Endothelial cell of umbilical vein (primary cell): ENCODE measurements at regions of chr6 and their contacts with region 1.

Region 1: GRCh38 chr6:37691904-37692806 is 5.5 kb downstream of the MDGA1 start:
- DNase-seq: peak; percentile 50
- H3K4me3 ChIP-seq: no peak overlapping the region
- H3K27ac ChIP-seq: no peak overlapping the region
- H3K4me1 ChIP-seq: peaks cover 10% of the 10 kb centered on the region
- H3K27me3 ChIP-seq: peaks cover 34 to 40% of the 10 kb centered on the region in 2 experiments
- CTCF ChIP-seq: peak; percentile 96 to 97
- POLR2A ChIP-seq: no peak

Region 2: DNA sequence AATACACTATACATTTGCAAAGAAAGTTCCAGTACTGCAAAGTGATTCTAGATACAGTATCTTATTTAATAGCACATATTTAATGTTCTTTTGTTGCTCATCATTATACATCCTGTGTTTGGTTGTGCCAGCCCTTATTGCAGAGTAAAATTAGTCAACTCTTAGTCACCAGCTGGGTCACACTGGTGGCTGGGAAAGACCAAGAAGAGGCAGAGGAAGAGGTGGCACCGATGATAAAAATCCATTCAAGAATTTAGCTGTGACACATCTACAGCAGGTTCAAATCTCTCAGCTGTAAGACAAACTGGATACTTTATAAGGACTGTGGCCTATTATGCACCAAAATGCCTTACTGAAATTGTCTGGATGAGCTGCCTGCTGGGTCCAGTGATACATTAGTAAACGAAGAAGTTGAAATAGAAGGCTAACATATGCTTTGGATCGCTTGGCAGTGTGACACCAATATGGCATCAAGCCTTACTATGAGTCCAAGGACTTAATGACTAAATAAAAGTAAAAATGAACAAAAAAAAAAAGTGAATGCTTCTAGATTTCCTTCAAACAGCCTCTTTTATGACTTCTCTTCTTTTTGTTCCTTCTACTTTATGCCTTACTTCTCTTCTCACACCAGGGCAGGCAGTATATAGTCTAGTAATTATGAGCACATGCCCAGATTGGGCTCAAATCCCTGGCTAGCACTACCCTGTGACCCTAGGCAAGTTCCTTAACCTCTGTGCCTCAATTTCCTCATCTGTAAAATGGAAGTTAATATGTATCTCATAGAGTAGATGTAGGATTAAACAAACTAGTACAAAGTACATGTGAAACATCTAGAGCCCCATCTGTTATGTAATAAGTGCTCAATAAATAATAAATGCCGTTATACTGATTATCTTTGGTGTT is 367.8 kb before region 1 on chr6:
- CTCF ChIA-PET with region 1: interaction called, 16 read pairs
- POLR2A ChIA-PET with region 1: no interaction called
- dilution Hi-C with region 1: no loop called
- intact Hi-C with region 1: loop called (anchors 1 kb)
- DNase-seq: peak; percentile 83
- H3K4me3 ChIP-seq: no peak overlapping the region
- H3K27ac ChIP-seq: peak overlapping the region; percentile 19
- H3K4me1 ChIP-seq: peaks cover 15% of the 10 kb centered on the region
- H3K27me3 ChIP-seq: no peaks in the 10 kb centered on the region
- CTCF ChIP-seq: no peak
- POLR2A ChIP-seq: no peak

Region 3: DNA sequence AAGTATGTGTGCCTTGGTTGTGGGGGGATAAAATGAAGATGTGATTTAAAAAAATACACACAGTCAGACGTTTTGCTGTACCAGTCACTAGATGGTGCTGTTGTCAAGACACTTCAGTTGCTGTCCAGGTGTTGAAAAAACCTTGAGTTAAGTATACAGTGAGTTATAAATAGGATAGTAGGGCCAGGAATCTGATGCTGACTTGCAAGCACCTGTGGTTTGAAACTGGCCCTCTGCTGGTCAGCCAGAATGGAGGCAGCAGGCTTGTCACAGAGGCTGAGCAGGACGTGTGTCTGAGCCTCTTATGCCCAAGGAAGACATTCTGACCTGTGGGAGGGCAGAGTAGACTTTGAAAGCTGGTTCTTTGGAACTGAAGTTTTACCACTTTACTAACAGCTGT is 310.6 kb before region 1 on chr6:
- CTCF ChIA-PET with region 1: interaction called, 9 read pairs
- POLR2A ChIA-PET with region 1: no interaction called
- dilution Hi-C with region 1: no loop called
- intact Hi-C with region 1: loop called (anchors 2 kb)
- DNase-seq: peak; percentile 60
- H3K4me3 ChIP-seq: no peak overlapping the region
- H3K27ac ChIP-seq: no peak overlapping the region
- H3K4me1 ChIP-seq: no peaks in the 10 kb centered on the region
- H3K27me3 ChIP-seq: no peaks in the 10 kb centered on the region
- CTCF ChIP-seq: peak; percentile 45 to 52
- POLR2A ChIP-seq: no peak

Region 4: DNA sequence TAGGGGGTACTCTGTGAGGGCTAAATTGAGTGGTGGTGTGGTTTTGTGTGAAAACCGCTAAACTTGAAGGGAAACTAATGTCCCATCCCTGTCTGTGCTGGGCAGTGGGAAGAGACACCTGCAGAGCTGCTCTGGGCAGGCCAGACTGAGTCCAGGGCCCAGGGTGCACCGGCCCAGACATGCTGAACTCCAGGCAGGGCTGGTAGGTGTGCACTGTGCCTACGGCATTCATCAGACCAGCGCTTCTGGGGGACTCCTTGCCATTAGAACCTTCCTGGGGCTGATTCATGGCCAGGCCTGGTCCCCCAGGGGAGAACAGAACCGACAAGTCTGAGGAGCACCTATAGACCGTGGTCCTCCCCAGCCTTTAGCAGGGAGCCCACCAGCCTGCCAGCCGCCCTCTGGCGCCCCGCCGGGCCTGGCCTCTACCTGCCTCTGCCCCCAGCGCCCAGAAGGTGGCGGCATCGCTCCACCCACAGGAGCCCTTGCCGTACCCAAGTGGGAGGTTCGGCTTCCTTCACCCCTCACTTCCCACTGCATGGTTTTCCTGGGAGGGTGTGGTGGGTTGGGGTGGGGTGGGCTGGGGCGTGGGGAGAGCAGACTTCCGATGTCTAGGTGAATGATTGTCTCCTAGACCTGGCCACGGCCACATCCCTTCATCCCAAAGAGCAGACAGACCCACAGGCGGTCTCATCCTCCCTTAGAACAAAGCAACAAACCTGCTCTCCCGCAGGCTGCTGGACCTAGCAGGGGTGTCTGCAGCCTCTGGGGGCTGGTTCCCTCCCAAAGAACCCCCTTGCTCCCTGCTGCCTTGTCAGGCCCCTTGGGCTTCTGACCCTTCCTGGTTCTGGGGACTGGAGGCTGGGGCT is 208.0 kb before region 1 on chr6:
- CTCF ChIA-PET with region 1: interaction called, 13 read pairs
- POLR2A ChIA-PET with region 1: no interaction called
- dilution Hi-C with region 1: no loop called
- intact Hi-C with region 1: loop called (anchors 1 kb)
- DNase-seq: peak; percentile 33
- H3K4me3 ChIP-seq: no peak overlapping the region
- H3K27ac ChIP-seq: no peak overlapping the region
- H3K4me1 ChIP-seq: no peaks in the 10 kb centered on the region
- H3K27me3 ChIP-seq: no peaks in the 10 kb centered on the region
- CTCF ChIP-seq: peak; percentile 65 to 91
- POLR2A ChIP-seq: no peak

Region 5: DNA sequence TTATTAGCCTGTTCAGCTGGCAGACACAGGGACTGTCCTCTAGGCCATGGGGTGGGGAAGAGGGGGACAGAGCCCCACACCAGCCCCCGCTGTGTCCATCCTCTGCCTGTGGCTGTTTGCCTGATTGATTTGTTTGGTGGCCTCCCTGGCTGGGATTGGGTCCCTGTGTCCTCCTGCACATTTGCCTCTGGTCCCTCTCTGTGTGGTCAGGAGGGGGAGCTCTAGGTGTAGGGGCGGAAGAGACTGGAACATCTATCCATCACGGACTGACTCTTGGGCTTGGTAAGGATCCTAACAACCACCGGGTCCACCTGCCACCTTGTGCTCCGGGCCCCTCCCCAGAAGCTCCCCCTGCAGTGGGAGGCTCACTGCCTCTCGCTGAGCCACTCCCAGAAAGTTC is 154.0 kb before region 1 on chr6:
- CTCF ChIA-PET with region 1: interaction called, 51 read pairs
- POLR2A ChIA-PET with region 1: no interaction called
- dilution Hi-C with region 1: no loop called
- intact Hi-C with region 1: loop called (anchors 1 kb)
- DNase-seq: peak; percentile 20
- H3K4me3 ChIP-seq: no peak overlapping the region
- H3K27ac ChIP-seq: no peak overlapping the region
- H3K4me1 ChIP-seq: peaks cover 7% of the 10 kb centered on the region
- H3K27me3 ChIP-seq: peaks cover 47 to 48% of the 10 kb centered on the region in 2 experiments
- CTCF ChIP-seq: peak; percentile 33 to 53
- POLR2A ChIP-seq: no peak

Region 6: DNA sequence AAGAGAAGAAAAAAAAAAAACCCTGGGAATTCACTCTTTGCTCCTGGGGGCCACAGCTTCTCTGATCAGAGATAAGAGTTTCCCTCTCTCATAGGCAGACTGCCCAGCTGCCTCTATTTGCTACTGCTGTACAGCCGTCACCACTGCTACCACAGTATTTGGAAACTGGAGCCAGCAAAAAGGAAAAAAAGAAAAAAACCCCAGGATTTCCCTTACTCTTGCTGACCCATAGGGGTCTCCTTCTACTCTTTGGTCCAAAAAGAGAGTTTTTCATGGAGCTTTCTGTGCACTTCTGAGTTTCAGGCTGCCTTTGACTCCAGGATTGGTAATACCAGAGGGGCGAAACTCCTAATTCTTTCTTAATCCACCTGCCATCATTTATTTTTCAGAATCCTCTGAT is 84.2 kb before region 1 on chr6:
- CTCF ChIA-PET with region 1: interaction called, 57 read pairs
- POLR2A ChIA-PET with region 1: no interaction called
- dilution Hi-C with region 1: no loop called
- intact Hi-C with region 1: loop called (anchors 1 kb)
- DNase-seq: peak; percentile 12
- H3K4me3 ChIP-seq: no peak overlapping the region
- H3K27ac ChIP-seq: no peak overlapping the region
- H3K4me1 ChIP-seq: no peaks in the 10 kb centered on the region
- H3K27me3 ChIP-seq: peaks cover 20 to 24% of the 10 kb centered on the region in 2 experiments
- CTCF ChIP-seq: peak in 1 of 2 donors; percentile 41
- POLR2A ChIP-seq: no peak

Region 7: GRCh38 chr6:37709250-37710197 is 17.4 kb after region 1 on chr6:
- CTCF ChIA-PET with region 1: no interaction called
- POLR2A ChIA-PET with region 1: no interaction called
- dilution Hi-C with region 1: no loop called
- intact Hi-C with region 1: no loop called
- DNase-seq: no peak
- H3K4me3 ChIP-seq: no peak overlapping the region
- H3K27ac ChIP-seq: no peak overlapping the region
- H3K4me1 ChIP-seq: peaks cover 4% of the 10 kb centered on the region
- H3K27me3 ChIP-seq: no peaks in the 10 kb centered on the region
- CTCF ChIP-seq: no peak
- POLR2A ChIP-seq: no peak